CD4-positive, alpha-beta memory T cell (primary cell): ENCODE measurements at regions of chr16 and their contacts with region 1.

Region 1: DNA sequence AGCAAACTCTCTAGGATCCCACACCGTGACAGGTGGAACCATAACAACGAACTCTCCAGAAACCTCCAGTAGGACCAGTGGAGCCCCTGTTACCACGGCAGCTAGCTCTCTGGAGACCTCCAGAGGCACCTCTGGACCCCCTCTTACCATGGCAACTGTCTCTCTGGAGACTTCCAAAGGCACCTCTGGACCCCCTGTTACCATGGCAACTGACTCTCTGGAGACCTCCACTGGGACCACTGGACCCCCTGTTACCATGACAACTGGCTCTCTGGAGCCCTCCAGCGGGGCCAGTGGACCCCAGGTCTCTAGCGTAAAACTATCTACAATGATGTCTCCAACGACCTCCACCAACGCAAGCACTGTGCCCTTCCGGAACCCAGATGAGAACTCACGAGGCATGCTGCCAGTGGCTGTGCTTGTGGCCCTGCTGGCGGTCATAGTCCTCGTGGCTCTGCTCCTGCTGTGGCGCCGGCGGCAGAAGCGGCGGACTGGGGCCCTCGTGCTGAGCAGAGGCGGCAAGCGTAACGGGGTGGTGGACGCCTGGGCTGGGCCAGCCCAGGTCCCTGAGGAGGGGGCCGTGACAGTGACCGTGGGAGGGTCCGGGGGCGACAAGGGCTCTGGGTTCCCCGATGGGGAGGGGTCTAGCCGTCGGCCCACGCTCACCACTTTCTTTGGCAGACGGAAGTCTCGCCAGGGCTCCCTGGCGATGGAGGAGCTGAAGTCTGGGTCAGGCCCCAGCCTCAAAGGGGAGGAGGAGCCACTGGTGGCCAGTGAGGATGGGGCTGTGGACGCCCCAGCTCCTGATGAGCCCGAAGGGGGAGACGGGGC is 1.3 kb downstream of the SPN start:
- DNase-seq: peak; percentile 46 to 69 (median 51)
- H3K4me3 ChIP-seq: peak overlapping the region; percentile 78 to 95
- H3K4me3 Mint-ChIP-seq: peak overlapping the region; percentile 97 to 99 (median 99)
- H3K27ac ChIP-seq: peak overlapping the region; percentile 82
- H3K27ac Mint-ChIP-seq: peak overlapping the region; percentile 94 to 100 (median 97)
- H3K4me1 ChIP-seq: peaks cover 69% of the 10 kb centered on the region
- H3K4me1 Mint-ChIP-seq: peaks cover 35 to 91% (median 56%) of the 10 kb centered on the region in 4 donors
- H3K27me3 ChIP-seq: no peaks in the 10 kb centered on the region
- H3K27me3 Mint-ChIP-seq: peaks cover 0 to 3% of the 10 kb centered on the region in 2 donors

Region 2: DNA sequence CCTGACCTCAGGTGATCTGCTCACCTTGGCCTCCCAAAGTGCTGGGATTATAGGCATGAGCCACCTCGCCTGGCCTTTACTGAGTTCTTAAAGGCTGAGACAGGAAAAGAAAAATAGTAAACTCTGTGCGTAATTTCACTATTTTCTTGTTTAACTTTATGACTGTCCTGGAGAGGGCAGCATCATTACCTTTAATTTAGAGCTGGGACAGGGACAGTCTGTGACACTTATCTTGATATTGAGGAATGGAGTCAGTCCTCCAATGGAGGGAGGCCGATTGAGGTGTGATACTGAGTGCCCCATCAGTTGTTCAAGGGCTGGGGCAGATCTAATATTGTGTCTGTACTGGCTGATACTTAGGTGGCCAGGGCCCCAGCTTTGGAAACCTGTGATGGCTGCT is 22.7 kb before region 1 on chr16:
- CTCF ChIA-PET with region 1: interaction called, 12 read pairs
- POLR2A ChIA-PET with region 1: interaction called, 5 read pairs
- intact Hi-C with region 1: no loop called
- DNase-seq: peak in 2 of 5 donors; percentile 26 to 37
- H3K4me3 ChIP-seq: no peak overlapping the region
- H3K4me3 Mint-ChIP-seq: peak overlapping the region in 3 of 8 donors; percentile 15 to 49 (median 25)
- H3K27ac ChIP-seq: no peak overlapping the region
- H3K27ac Mint-ChIP-seq: peak overlapping the region in 5 of 7 donors; percentile 0 to 78 (median 57)
- H3K4me1 ChIP-seq: peaks cover 22% of the 10 kb centered on the region
- H3K4me1 Mint-ChIP-seq: peaks cover 15 to 32% (median 22%) of the 10 kb centered on the region in 4 donors
- H3K27me3 ChIP-seq: no peaks in the 10 kb centered on the region
- H3K27me3 Mint-ChIP-seq: no peaks in the 10 kb centered on the region

Region 3: GRCh38 chr16:29653471-29653870 is 10.8 kb before region 1 on chr16:
- CTCF ChIA-PET with region 1: interaction called, 3 read pairs
- POLR2A ChIA-PET with region 1: interaction called, 18 read pairs
- intact Hi-C with region 1: no loop called
- DNase-seq: no peak
- H3K4me3 ChIP-seq: no peak overlapping the region
- H3K4me3 Mint-ChIP-seq: no peak overlapping the region
- H3K27ac ChIP-seq: no peak overlapping the region
- H3K27ac Mint-ChIP-seq: peak overlapping the region in 1 of 7 donors; percentile 17
- H3K4me1 ChIP-seq: peaks cover 4% of the 10 kb centered on the region
- H3K4me1 Mint-ChIP-seq: peaks cover 4 to 13% (median 8%) of the 10 kb centered on the region in 4 donors
- H3K27me3 ChIP-seq: no peaks in the 10 kb centered on the region
- H3K27me3 Mint-ChIP-seq: no peaks in the 10 kb centered on the region

Region 4: DNA sequence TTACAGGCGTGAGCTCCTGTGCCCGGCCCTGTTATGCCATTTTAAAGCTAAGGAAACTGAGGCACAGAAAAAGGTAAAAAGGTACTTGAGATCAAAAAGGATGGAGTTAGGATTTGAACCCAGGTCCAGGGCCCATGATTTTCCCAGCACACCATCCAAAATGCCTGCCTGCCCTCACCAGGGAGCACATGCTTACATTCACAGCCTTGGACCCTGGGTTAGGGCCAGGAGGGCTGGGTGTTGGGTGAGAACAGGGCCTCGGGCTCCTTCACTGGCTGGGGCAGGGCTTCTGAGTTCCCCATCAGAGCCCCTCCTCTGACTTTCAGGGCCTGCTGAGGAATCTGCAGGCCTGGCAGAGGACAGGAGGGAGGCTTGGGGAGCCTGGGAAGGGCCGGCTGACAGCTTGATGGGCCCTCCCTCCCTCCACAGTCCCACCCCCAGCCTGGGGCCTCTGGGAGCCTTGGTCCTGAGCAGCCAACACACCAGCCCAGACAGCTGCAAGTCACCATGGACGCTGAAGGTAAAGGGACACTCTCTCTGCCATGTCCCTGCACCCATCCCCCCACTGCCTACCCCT is 14.5 kb after region 1 on chr16 and contains the start of gene QPRT:
- CTCF ChIA-PET with region 1: interaction called, 9 read pairs
- POLR2A ChIA-PET with region 1: interaction called, 75 read pairs
- intact Hi-C with region 1: loop called (anchors 2 kb)
- DNase-seq: no peak
- H3K4me3 ChIP-seq: peak within 1 kb of the TSS; percentile 9 to 36
- H3K4me3 Mint-ChIP-seq: peak within 1 kb of the TSS; percentile 56 to 80 (median 70)
- H3K27ac ChIP-seq: no peak within 1 kb of the TSS
- H3K27ac Mint-ChIP-seq: peak within 1 kb of the TSS; percentile 50 to 95 (median 86)
- H3K4me1 ChIP-seq: peaks cover 24% of the 10 kb centered on the region
- H3K4me1 Mint-ChIP-seq: peaks cover 12 to 35% (median 15%) of the 10 kb centered on the region in 4 donors
- H3K27me3 ChIP-seq: no peaks in the 10 kb centered on the region
- H3K27me3 Mint-ChIP-seq: no peaks in the 10 kb centered on the region
- total RNA-seq, gene QPRT: 0.99 to 1.1 TPM